B cell (primary cell): ENCODE measurements at regions of chr6 and their contacts with region 1.

Region 1: DNA sequence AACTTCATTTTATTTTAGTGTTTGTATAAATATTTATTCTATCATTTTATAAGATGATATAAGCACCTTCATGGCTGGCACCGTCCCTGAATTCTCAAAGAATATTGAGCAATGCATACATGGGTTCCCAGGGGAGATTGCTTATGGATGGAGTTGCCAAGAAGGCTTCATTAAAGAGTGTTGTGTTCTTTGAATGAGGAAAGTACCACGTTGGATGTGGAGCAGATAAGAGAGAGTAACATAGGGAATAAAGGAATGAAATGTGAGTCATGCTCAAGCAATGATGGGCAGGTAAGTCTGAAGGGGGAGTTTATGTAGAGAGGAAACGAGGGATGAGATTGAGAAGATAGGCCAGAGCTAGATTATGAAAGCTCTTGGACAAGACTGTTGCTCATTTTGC is 10.3 kb downstream of the DSE start:
- DNase-seq: no peak
- ATAC-seq: no peak
- H3K4me3 ChIP-seq: no peak overlapping the region
- H3K4me3 Mint-ChIP-seq: no peak overlapping the region
- H3K27ac ChIP-seq: no peak overlapping the region
- H3K27ac Mint-ChIP-seq: no peak overlapping the region
- H3K4me1 ChIP-seq: no peaks in the 10 kb centered on the region
- H3K4me1 Mint-ChIP-seq: peaks cover 9% of the 10 kb centered on the region
- H3K27me3 ChIP-seq: no peaks in the 10 kb centered on the region
- H3K27me3 Mint-ChIP-seq: no peaks in the 10 kb centered on the region
- CTCF ChIP-seq: no peak

Region 2: GRCh38 chr6:116229287-116229913 is 151.6 kb before region 1 on chr6:
- CTCF ChIA-PET with region 1: no interaction called
- POLR2A ChIA-PET with region 1: interaction called, 12 read pairs
- intact Hi-C with region 1: no loop called
- DNase-seq: peak; percentile 18
- ATAC-seq: no peak
- H3K4me3 ChIP-seq: no peak overlapping the region
- H3K4me3 Mint-ChIP-seq: no peak overlapping the region
- H3K27ac ChIP-seq: no peak overlapping the region
- H3K27ac Mint-ChIP-seq: no peak overlapping the region
- H3K4me1 ChIP-seq: no peaks in the 10 kb centered on the region
- H3K4me1 Mint-ChIP-seq: no peaks in the 10 kb centered on the region
- H3K27me3 ChIP-seq: no peaks in the 10 kb centered on the region
- H3K27me3 Mint-ChIP-seq: no peaks in the 10 kb centered on the region
- CTCF ChIP-seq: no peak